ENCODE measurements at regions of chr11 and their contacts with region 1.

Region 1: GRCh38 chr11:72030472-72031045 is 31.9 kb downstream of the IL18BP start:
- DNase-seq: no peak
- ATAC-seq: no peak
- H3K4me3 Mint-ChIP-seq: no peak overlapping the region
- H3K27ac Mint-ChIP-seq: no peak overlapping the region
- H3K4me1 Mint-ChIP-seq: peaks cover 2% of the 10 kb centered on the region; the same call in 1 of the 2 replicates
- H3K27me3 Mint-ChIP-seq: no peaks in the 10 kb centered on the region
- CTCF ChIP-seq: no peak

Region 2: GRCh38 chr11:72058416-72059034 is 28.0 kb after region 1 on chr11:
- CTCF ChIA-PET with region 1: interaction called, 13 read pairs
- POLR2A ChIA-PET with region 1: no interaction called
- DNase-seq: no peak
- ATAC-seq: no peak
- H3K4me3 Mint-ChIP-seq: no peak overlapping the region
- H3K27ac Mint-ChIP-seq: peak overlapping the region; percentile 60; the same call in 1 of the 2 replicates
- H3K4me1 Mint-ChIP-seq: peaks cover 14% of the 10 kb centered on the region
- H3K27me3 Mint-ChIP-seq: no peaks in the 10 kb centered on the region
- CTCF ChIP-seq: no peak

Region 3: DNA sequence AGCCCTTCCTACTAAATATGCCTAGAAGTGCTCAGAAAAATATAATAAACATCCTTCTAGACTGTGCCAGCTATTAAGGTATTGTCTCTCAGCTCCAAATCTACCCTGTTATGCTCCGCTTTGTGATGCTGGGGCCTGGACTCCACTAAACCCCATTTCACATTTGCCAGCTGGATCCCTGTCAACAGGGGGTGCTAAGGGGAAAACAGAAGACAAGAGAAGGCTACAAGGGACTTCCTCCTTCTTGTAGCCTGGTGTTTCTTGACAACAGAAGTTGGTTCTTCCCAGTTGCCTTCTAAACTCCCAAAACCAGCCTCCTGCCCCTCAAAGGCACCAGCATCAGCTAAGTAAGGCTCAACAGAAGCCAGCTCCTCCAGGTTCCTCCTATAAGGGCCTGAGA is 44.5 kb after region 1 on chr11:
- CTCF ChIA-PET with region 1: interaction called, 28 read pairs
- POLR2A ChIA-PET with region 1: no interaction called
- DNase-seq: no peak
- ATAC-seq: peak; percentile 67
- H3K4me3 Mint-ChIP-seq: no peak overlapping the region
- H3K27ac Mint-ChIP-seq: peak overlapping the region; percentile 55
- H3K4me1 Mint-ChIP-seq: peaks cover 42% of the 10 kb centered on the region
- H3K27me3 Mint-ChIP-seq: no peaks in the 10 kb centered on the region
- CTCF ChIP-seq: no peak

Region 4: DNA sequence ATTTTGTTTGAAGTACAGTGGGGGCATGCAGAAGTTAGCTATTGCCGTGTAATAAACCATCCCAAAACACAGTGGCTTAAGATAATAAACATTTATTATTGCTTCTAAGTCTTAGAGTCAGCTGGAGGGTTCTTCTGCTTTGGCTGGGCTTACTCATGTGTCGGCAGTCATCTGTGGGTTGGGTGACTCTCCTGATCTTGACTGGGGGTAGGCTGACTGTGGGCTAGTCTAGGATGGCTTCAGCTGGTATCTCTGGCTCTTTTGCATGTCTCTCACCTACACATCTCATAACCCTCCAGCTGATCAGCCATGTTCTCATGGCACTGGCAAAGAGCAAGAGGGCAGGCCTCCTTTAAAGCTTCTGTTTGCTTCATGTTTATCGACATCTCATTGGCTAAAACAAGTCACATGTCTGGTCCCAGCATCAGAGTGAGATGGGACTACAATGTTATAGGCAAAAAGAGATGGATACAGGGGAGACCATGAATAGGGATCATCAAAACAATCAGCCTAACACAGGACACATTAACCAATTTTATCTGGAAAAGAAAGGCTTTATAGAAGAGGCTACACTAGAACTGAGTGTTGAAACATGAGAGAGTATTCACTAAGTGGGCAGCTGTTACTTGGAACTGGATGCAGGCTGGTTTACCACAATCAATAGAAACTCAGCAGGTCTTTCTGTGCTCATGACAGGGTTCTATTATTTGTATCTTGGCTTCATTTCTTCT is 55.2 kb after region 1 on chr11:
- CTCF ChIA-PET with region 1: interaction called, 235 read pairs
- POLR2A ChIA-PET with region 1: interaction called, 12 read pairs
- DNase-seq: no peak
- ATAC-seq: peak; percentile 45
- H3K4me3 Mint-ChIP-seq: no peak overlapping the region
- H3K27ac Mint-ChIP-seq: peak overlapping the region; percentile 27; the same call in 1 of the 2 replicates
- H3K4me1 Mint-ChIP-seq: peaks cover 9% of the 10 kb centered on the region
- H3K27me3 Mint-ChIP-seq: no peaks in the 10 kb centered on the region
- CTCF ChIP-seq: no peak

Region 5: DNA sequence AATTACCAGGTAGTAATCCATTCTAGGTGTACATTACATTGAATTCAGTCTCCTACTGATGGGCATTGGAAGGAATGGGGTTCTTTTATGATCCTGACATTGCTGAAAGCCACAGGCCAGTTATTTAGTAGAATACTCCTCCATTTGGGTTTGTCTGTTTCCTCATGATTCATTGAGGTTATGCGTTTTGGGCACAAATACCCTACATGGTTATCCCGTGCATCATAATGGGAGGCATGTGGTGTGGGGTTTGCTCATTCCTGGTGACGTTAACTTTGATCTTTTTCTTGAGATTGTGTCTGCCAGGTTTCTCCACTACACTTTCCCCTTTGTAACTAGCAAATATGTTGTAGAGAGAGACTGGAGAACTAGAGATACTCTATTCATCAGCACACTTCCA is 110.5 kb after region 1 on chr11:
- CTCF ChIA-PET with region 1: interaction called, 13 read pairs
- POLR2A ChIA-PET with region 1: no interaction called
- DNase-seq: no peak
- ATAC-seq: no peak
- H3K4me3 Mint-ChIP-seq: no peak overlapping the region
- H3K27ac Mint-ChIP-seq: no peak overlapping the region
- H3K4me1 Mint-ChIP-seq: no peaks in the 10 kb centered on the region
- H3K27me3 Mint-ChIP-seq: peaks cover 27% of the 10 kb centered on the region
- CTCF ChIP-seq: no peak

Region 6: DNA sequence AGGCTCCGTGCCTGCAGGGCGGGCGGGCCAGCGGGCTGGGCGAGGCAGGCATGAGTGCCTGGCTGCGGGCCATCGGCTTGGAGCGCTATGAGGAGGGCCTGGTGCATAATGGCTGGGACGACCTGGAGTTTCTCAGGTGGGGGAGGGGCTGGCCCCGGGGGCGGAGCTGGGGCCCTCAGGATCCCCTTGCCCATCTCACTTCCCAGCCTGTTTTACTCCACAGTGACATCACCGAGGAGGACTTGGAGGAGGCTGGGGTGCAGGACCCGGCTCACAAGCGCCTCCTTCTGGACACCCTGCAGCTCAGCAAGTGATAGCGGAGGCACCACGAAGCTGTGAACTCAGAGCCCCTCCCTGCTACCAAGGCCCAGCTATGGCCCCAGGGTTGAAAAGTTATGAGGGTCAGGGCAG is 207.5 kb after region 1 on chr11:
- CTCF ChIA-PET with region 1: interaction called, 30 read pairs
- POLR2A ChIA-PET with region 1: no interaction called
- DNase-seq: peak; percentile 94
- ATAC-seq: peak; percentile 81
- H3K4me3 Mint-ChIP-seq: peak overlapping the region; percentile 73
- H3K27ac Mint-ChIP-seq: no peak overlapping the region
- H3K4me1 Mint-ChIP-seq: peaks cover 31% of the 10 kb centered on the region
- H3K27me3 Mint-ChIP-seq: peaks cover 46% of the 10 kb centered on the region
- CTCF ChIP-seq: peak; percentile 84